ENCODE measurements at regions of chr3 and their contacts with region 1.

Region 1: GRCh38 chr3:124730129-124730940 is at the start of gene UMPS:
- DNase-seq: peak; percentile 95
- ATAC-seq: peak; percentile 98
- H3K4me3 Mint-ChIP-seq: peak within 1 kb of the TSS; percentile 94
- H3K27ac Mint-ChIP-seq: peak within 1 kb of the TSS; percentile 98
- H3K4me1 Mint-ChIP-seq: peaks cover 29% of the 10 kb centered on the region
- H3K27me3 Mint-ChIP-seq: peaks cover 3% of the 10 kb centered on the region
- CTCF ChIP-seq: no peak
- total RNA-seq, gene UMPS: 41.7 to 53.1 TPM

Region 2: DNA sequence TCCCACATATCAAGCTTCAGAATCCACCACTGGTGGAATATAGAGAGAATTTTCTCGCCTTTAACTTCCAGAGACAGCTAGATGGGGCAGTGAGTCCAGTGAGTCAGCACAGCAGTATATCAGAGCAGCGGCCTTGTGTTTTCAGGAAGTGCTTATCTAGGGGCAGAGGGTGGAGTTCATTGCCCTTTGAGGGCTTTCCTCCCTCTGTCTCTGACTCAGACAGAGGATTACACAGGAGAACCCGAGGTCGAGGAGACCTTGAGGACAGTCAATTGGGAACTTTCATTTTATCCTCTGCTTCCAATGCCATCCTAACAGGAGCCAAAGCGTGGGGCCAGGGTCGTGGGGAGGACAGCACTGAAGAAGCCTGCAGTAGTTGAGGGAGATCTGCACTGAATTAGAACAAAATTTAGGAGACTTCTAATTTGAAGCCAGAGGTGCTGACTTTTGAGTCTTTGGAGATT is 109.7 kb before region 1 on chr3:
- CTCF ChIA-PET with region 1: no interaction called
- POLR2A ChIA-PET with region 1: no interaction called
- intact Hi-C with region 1: no loop called
- DNase-seq: peak; percentile 56
- ATAC-seq: peak; percentile 92
- H3K4me3 Mint-ChIP-seq: peak overlapping the region; percentile 44
- H3K27ac Mint-ChIP-seq: peak overlapping the region; percentile 77
- H3K4me1 Mint-ChIP-seq: peaks cover 35% of the 10 kb centered on the region
- H3K27me3 Mint-ChIP-seq: peaks cover 4% of the 10 kb centered on the region
- CTCF ChIP-seq: no peak

Region 3: DNA sequence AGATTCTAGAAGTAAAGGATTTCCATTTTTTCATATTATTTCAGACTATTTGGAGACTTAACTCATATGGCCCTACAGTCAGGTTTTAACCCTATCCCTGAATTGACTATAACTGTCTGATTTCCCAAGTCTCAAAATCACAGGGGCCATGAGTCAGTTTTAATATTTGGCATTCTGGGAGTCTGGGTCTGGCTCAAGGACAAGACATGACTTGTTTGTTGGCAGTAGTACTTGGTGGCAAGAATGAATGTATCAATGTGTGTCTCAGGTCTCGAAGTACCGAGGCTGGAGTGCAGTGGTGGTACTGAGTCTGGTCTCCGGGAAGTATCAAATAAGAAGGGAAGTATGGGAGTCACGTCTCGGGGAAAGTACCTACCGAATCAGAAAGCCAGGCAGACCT is 10.7 kb after region 1 on chr3:
- CTCF ChIA-PET with region 1: interaction called, 3 read pairs
- POLR2A ChIA-PET with region 1: interaction called, 11 read pairs
- intact Hi-C with region 1: no loop called
- DNase-seq: no peak
- ATAC-seq: no peak
- H3K4me3 Mint-ChIP-seq: no peak overlapping the region
- H3K27ac Mint-ChIP-seq: no peak overlapping the region
- H3K4me1 Mint-ChIP-seq: peaks cover 18% of the 10 kb centered on the region
- H3K27me3 Mint-ChIP-seq: no peaks in the 10 kb centered on the region
- CTCF ChIP-seq: no peak